Heart right ventricle (tissue), 16 donors: ENCODE measurements at regions of chr6 and their contacts with region 1.

Region 1: GRCh38 chr6:29976588-29977424 is 34.5 kb downstream of the HLA-A start:
- DNase-seq: peak; percentile 89 to 93
- ATAC-seq: peak; percentile 93 to 97 (median 96)
- H3K4me3 ChIP-seq: peak overlapping the region; percentile 36 to 78 (median 60)
- H3K27ac ChIP-seq: peak overlapping the region; percentile 87 to 99 (median 96)
- H3K4me1 ChIP-seq: peaks cover 0 to 34% (median 23%) of the 10 kb centered on the region in 9 donors
- H3K27me3 ChIP-seq: peaks cover 0 to 40% (median 0%) of the 10 kb centered on the region in 7 donors
- CTCF ChIP-seq: peak in 5 of 9 donors; percentile 12 to 51 (median 43)

Region 2: DNA sequence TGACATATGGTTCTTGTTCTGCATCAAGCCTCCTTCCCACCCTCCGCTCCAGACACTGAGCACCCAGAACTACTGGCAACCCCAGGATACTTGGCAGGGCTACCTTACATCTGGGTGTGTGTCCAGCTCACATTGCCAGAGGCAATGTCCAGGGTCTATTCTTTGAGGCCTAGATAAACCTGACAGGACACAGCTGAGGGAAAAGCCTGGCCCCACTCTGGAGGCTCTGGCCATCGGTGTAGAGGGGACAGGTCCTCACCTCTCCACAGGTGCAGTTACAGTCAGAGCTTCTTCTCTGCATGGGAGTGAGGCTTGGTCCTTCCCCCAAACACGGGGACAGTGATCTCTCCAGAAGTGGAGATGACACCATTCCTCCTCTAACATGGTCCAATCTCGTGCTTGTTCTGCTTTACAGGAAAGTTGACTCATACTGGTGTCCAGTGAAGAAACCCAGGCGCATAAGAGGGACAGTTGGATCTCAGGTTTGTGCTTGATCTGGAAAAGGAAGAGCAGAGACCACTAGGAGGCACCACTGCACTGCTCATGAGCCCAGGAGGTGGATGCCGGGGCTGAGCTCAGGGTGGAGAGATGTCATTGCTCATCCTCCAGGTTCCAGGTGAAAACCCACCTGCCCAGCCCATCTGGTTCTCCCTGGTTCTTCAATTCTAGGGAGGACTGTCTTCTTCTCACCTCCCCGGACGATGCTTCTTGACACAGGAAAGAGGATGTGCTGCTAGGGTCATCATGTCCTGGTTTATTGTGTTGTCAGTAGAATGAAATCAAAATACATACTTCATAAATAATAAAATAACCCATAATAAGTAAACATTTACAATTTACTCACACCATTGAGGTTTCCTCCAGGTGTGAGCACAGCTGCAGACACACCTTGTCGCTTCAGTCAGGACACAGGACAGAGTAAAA is 238.8 kb before region 1 on chr6:
- intact Hi-C with region 1: no loop called
- DNase-seq: peak; percentile 46 to 66
- ATAC-seq: peak; percentile 61 to 94 (median 90)
- H3K4me3 ChIP-seq: no peak overlapping the region
- H3K27ac ChIP-seq: peak overlapping the region in 1 of 10 donors; percentile 35
- H3K4me1 ChIP-seq: peaks cover 0 to 21% (median 10%) of the 10 kb centered on the region in 9 donors
- H3K27me3 ChIP-seq: no peaks in the 10 kb centered on the region
- CTCF ChIP-seq: peak; percentile 52 to 80 (median 73)

Region 3: GRCh38 chr6:29887819-29888776 is 88.7 kb before region 1 on chr6:
- intact Hi-C with region 1: loop called in 2 of 10 experiments (anchors 5 to 10 kb)
- DNase-seq: peak; percentile 79 to 82
- ATAC-seq: peak; percentile 87 to 96 (median 92)
- H3K4me3 ChIP-seq: peak overlapping the region; percentile 52 to 89 (median 75)
- H3K27ac ChIP-seq: peak overlapping the region; percentile 35 to 96 (median 90)
- H3K4me1 ChIP-seq: peaks cover 0 to 14% (median 7%) of the 10 kb centered on the region in 9 donors
- H3K27me3 ChIP-seq: no peaks in the 10 kb centered on the region
- CTCF ChIP-seq: no peak

Region 4: DNA sequence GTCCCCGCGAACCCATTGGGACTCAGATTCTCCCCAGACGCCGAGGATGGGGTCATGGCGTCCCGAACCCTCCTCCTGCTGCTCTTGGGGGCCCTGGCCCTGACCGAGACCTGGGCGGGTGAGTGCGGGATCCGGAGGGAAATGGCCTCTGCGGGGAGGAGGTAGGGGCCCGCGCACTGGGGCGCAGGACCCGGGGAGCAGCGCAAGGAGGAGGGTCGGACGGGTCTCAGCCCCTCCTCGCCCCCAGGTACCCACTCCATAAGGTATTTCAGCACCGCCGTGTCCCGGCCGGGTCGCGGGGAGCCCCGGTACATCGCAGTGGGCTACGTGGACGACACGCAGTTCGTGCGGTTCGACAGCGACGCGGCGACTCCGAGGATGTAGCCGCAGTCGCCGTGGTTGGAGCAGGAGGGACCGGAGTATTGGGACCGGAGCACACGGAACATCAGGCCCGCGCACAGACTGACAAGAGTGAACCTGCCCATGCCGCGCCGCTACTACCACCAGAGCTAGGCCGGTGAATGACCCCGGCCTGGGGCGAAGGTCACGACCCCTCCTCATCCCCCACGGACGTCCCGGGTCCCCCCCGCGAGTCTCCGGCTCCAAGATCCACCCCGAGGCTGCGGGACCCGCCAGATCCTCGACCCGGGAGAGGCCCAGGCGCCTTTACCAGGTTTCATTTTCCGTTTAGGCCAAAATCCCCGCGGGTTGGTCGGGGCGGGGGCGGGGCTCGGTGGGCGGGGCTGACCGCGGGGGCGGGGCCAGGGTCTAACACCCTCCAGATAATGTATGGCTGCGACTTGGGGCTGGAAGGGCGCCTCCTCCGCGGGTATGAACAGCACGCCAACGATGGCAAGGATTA is 50.2 kb before region 1 on chr6:
- intact Hi-C with region 1: loop called in 5 of 10 experiments (anchors 5 to 10 kb)
- DNase-seq: peak; percentile 74 to 77
- ATAC-seq: peak; percentile 85 to 96 (median 90)
- H3K4me3 ChIP-seq: peak overlapping the region; percentile 44 to 81 (median 62)
- H3K27ac ChIP-seq: peak overlapping the region; percentile 68 to 97 (median 88)
- H3K4me1 ChIP-seq: peaks cover 0 to 23% (median 12%) of the 10 kb centered on the region in 9 donors
- H3K27me3 ChIP-seq: no peaks in the 10 kb centered on the region
- CTCF ChIP-seq: no peak

Region 5: DNA sequence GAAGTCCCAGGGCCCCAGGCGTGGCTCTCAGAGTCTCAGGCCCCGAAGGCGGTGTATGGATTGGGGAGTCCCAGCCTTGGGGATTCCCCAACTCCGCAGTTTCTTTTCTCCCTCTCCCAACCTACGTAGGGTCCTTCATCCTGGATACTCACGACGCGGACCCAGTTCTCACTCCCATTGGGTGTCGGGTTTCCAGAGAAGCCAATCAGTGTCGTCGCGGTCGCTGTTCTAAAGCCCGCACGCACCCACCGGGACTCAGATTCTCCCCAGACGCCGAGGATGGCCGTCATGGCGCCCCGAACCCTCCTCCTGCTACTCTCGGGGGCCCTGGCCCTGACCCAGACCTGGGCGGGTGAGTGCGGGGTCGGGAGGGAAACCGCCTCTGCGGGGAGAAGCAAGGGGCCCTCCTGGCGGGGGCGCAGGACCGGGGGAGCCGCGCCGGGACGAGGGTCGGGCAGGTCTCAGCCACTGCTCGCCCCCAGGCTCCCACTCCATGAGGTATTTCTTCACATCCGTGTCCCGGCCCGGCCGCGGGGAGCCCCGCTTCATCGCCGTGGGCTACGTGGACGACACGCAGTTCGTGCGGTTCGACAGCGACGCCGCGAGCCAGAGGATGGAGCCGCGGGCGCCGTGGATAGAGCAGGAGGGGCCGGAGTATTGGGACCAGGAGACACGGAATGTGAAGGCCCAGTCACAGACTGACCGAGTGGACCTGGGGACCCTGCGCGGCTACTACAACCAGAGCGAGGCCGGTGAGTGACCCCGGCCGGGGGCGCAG is 34.3 kb before region 1 on chr6 and contains the start of gene HLA-A:
- intact Hi-C with region 1: loop called in 6 of 10 experiments (anchors 1 to 5 kb)
- DNase-seq: peak; percentile 91 to 96
- ATAC-seq: peak; percentile 97 to 98 (median 98)
- H3K4me3 ChIP-seq: peak within 1 kb of the TSS; percentile 53 to 96 (median 78)
- H3K27ac ChIP-seq: peak within 1 kb of the TSS; percentile 73 to 98 (median 91)
- H3K4me1 ChIP-seq: peaks cover 0 to 42% (median 29%) of the 10 kb centered on the region in 9 donors
- H3K27me3 ChIP-seq: no peaks in the 10 kb centered on the region
- CTCF ChIP-seq: no peak
- total RNA-seq, gene HLA-A: 218 to 1,594 (median 276) TPM

Region 6: GRCh38 chr6:30061092-30061857 is 84.5 kb after region 1 on chr6 and contains the start of gene POLR1H:
- intact Hi-C with region 1: loop called in 1 of 10 experiments (anchors 2 kb)
- DNase-seq: peak; percentile 89 to 95
- ATAC-seq: peak; percentile 97 to 99 (median 99)
- H3K4me3 ChIP-seq: peak within 1 kb of the TSS; percentile 66 to 94 (median 82)
- H3K27ac ChIP-seq: peak within 1 kb of the TSS; percentile 43 to 95 (median 92)
- H3K4me1 ChIP-seq: peaks cover 8 to 47% (median 37%) of the 10 kb centered on the region in 9 donors
- H3K27me3 ChIP-seq: no peaks in the 10 kb centered on the region
- CTCF ChIP-seq: peak in 2 of 9 donors; percentile 4 to 29
- total RNA-seq, gene POLR1H: 11.5 to 21.8 (median 14.7) TPM